ENCODE measurements at regions of chr17 and their contacts with region 1.

Region 1: GRCh38 chr17:27236717-27237315 is 57.1 kb upstream of the WSB1 start:
- DNase-seq: peak in 1 of 2 experiments; percentile 86
- H3K4me3 ChIP-seq: no peak overlapping the region
- H3K27ac ChIP-seq: no peak overlapping the region
- H3K4me1 ChIP-seq: no peaks in the 10 kb centered on the region; a peak in 1 of 7 replicates
- H3K27me3 ChIP-seq: no peaks in the 10 kb centered on the region
- CTCF ChIP-seq: peak in 2 of 3 experiments; percentile 66 to 75; a peak in 3 of 4 replicates
- EP300 ChIP-seq: no peak
- POLR2A ChIP-seq: no peak
- RAD21 ChIP-seq: peak; percentile 82 to 84

Region 2: GRCh38 chr17:27066315-27066714 is 170.5 kb before region 1 on chr17:
- CTCF ChIA-PET with region 1: no interaction called
- POLR2A ChIA-PET with region 1: no interaction called
- DNase-seq: no peak
- H3K4me3 ChIP-seq: no peak overlapping the region
- H3K27ac ChIP-seq: no peak overlapping the region
- H3K4me1 ChIP-seq: no peaks in the 10 kb centered on the region
- H3K27me3 ChIP-seq: peaks cover 0 to 1% (median 0%) of the 10 kb centered on the region in 4 experiments; a peak in 1 of 7 replicates
- CTCF ChIP-seq: no peak
- EP300 ChIP-seq: no peak
- POLR2A ChIP-seq: no peak
- RAD21 ChIP-seq: no peak

Region 3: GRCh38 chr17:27256225-27257030 is 19.6 kb after region 1 on chr17:
- CTCF ChIA-PET with region 1: interaction called, 13 read pairs
- POLR2A ChIA-PET with region 1: no interaction called
- DNase-seq: no peak
- H3K4me3 ChIP-seq: no peak overlapping the region
- H3K27ac ChIP-seq: no peak overlapping the region
- H3K4me1 ChIP-seq: no peaks in the 10 kb centered on the region
- H3K27me3 ChIP-seq: no peaks in the 10 kb centered on the region
- CTCF ChIP-seq: no peak
- EP300 ChIP-seq: no peak
- POLR2A ChIP-seq: no peak
- RAD21 ChIP-seq: no peak

Region 4: GRCh38 chr17:27264068-27264812 is 27.4 kb after region 1 on chr17:
- CTCF ChIA-PET with region 1: interaction called, 13 read pairs
- POLR2A ChIA-PET with region 1: no interaction called
- DNase-seq: no peak
- H3K4me3 ChIP-seq: no peak overlapping the region
- H3K27ac ChIP-seq: no peak overlapping the region
- H3K4me1 ChIP-seq: no peaks in the 10 kb centered on the region
- H3K27me3 ChIP-seq: no peaks in the 10 kb centered on the region
- CTCF ChIP-seq: no peak
- EP300 ChIP-seq: no peak
- POLR2A ChIP-seq: no peak
- RAD21 ChIP-seq: no peak

Region 5: DNA sequence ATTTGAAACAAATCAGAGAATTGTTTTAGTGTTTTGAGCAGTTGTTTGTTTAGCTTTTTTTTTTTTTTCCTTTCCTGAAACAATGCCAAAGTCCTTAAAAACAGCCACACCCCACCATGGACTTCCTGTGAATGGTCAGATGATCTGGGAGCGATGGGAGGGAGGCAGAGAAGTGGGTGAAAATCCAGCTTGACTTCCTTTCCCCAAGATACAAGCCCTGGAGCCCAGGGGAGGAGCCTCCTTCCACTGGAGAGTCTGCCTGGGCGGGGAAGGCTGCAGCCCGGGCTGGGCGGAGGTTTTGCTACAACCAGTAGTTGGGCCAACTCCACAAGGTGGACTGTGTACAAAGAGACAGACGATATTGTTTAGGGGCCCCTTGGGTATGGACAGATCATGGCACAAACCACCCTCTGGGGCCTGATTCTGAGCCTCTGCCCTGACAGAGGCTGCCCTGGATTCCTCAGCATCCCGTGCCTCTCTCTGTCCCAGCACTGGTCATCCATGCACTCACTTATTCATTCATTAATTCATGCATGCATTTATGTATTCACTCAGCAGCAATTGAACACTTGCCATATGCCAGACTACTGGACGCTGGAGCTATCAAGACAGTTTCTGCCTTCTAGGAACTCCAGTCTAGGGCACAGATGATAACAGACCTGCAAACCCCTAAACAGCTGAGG is 86.8 kb after region 1 on chr17:
- CTCF ChIA-PET with region 1: interaction called, 15 read pairs
- POLR2A ChIA-PET with region 1: no interaction called
- DNase-seq: peak in 1 of 2 experiments; percentile 53
- H3K4me3 ChIP-seq: no peak overlapping the region
- H3K27ac ChIP-seq: no peak overlapping the region
- H3K4me1 ChIP-seq: peaks cover 0 to 1% (median 0%) of the 10 kb centered on the region in 4 experiments; a peak in 1 of 7 replicates
- H3K27me3 ChIP-seq: no peaks in the 10 kb centered on the region
- CTCF ChIP-seq: no peak
- EP300 ChIP-seq: no peak
- POLR2A ChIP-seq: no peak
- RAD21 ChIP-seq: no peak

Region 6: DNA sequence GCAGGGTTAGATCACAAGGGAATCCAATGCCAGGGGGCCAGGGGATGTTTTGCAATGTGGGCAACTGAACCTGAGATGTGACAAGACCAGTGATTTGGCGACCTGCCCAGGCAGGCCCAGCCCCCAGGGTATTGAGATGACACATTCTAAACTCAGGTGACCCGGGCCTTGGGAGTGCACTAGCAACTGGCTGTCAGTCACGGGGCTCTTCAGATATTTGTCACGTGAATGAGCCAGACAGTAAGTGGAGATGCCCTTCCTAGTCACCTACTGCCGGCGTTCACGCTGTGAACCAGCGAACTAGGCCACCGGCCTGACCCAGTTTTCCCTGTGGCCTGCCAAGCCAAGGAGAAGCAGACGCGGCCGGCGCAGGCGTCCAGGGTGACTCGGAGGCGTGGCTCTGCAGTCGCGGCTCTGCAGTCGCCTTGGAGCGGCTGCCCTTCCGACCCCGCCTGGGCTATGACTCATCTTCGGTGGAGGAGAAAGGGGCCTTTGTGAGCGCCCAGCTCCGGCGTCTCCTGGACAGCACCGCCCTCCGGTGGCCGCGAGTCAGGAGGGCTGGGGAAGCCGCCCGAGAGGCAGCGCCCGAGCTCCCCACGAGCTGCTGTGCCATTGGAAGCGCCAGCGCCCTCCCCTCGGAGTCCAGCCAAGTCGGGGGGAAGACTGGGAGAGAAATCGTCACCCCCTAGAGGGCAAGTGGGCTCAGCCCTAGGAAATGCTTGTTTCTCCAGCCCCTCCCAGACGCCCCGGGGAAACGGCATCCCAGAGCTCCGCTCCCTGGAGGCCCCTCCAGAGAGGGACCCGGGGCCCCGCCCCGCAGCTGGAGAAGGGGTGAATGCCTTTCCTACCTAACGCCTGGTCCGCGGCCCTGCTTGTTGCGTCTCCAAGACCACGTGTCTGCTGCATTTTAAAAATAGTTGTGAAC is 95.9 kb after region 1 on chr17:
- CTCF ChIA-PET with region 1: interaction called, 33 read pairs
- POLR2A ChIA-PET with region 1: interaction called, 3 read pairs
- DNase-seq: peak; percentile 89 to 95
- H3K4me3 ChIP-seq: peak overlapping the region; percentile 14 to 66 (median 56)
- H3K27ac ChIP-seq: peak overlapping the region; percentile 24; the same call in 1 of the 2 replicates
- H3K4me1 ChIP-seq: peaks cover 0 to 6% (median 5%) of the 10 kb centered on the region in 4 experiments; a peak in 6 of 7 replicates
- H3K27me3 ChIP-seq: no peaks in the 10 kb centered on the region; a peak in 1 of 7 replicates
- CTCF ChIP-seq: peak; percentile 65 to 81 (median 75)
- EP300 ChIP-seq: peak in 1 of 2 experiments; percentile 9; a peak in 1 of 3 replicates
- POLR2A ChIP-seq: peak in 1 of 2 experiments; percentile 55; a peak in 2 of 3 replicates
- RAD21 ChIP-seq: peak; percentile 86 to 92

Region 7: GRCh38 chr17:27353461-27354050 is 116.7 kb after region 1 on chr17:
- CTCF ChIA-PET with region 1: interaction called, 12 read pairs
- POLR2A ChIA-PET with region 1: no interaction called
- DNase-seq: peak; percentile 53 to 90
- H3K4me3 ChIP-seq: peak overlapping the region; percentile 47 to 94 (median 64)
- H3K27ac ChIP-seq: peak overlapping the region; percentile 58; the same call in 1 of the 2 replicates
- H3K4me1 ChIP-seq: peaks cover 0 to 8% (median 4%) of the 10 kb centered on the region in 4 experiments; a peak in 3 of 7 replicates
- H3K27me3 ChIP-seq: no peaks in the 10 kb centered on the region
- CTCF ChIP-seq: peak; percentile 74 to 96 (median 76)
- EP300 ChIP-seq: no peak
- POLR2A ChIP-seq: peak in 1 of 2 experiments; percentile 81; a peak in 1 of 3 replicates
- RAD21 ChIP-seq: peak; percentile 52 to 85; a peak in 3 of 4 replicates

Region 8: GRCh38 chr17:27381007-27381501 is 144.2 kb after region 1 on chr17:
- CTCF ChIA-PET with region 1: interaction called, 19 read pairs
- POLR2A ChIA-PET with region 1: no interaction called
- DNase-seq: peak; percentile 68 to 97
- H3K4me3 ChIP-seq: no peak overlapping the region
- H3K27ac ChIP-seq: no peak overlapping the region
- H3K4me1 ChIP-seq: no peaks in the 10 kb centered on the region
- H3K27me3 ChIP-seq: no peaks in the 10 kb centered on the region
- CTCF ChIP-seq: peak; percentile 100
- EP300 ChIP-seq: peak in 1 of 2 experiments; percentile 46; a peak in 1 of 3 replicates
- POLR2A ChIP-seq: no peak
- RAD21 ChIP-seq: peak; percentile 78 to 82